Heart left ventricle (tissue), 16 donors: ENCODE measurements at regions of chr1 and their contacts with region 1.

Region 1: GRCh38 chr1:235011599-235012435 is 116.8 kb downstream of the TOMM20 start:
- DNase-seq: peak; percentile 68 to 85 (median 74)
- ATAC-seq: peak; percentile 51 to 93 (median 88)
- H3K4me3 ChIP-seq: peak overlapping the region in 1 of 12 donors; percentile 10
- H3K27ac ChIP-seq: peak overlapping the region in 11 of 12 donors; percentile 32 to 92 (median 56)
- H3K4me1 ChIP-seq: peaks cover 0 to 68% (median 13%) of the 10 kb centered on the region in 12 donors
- H3K27me3 ChIP-seq: no peaks in the 10 kb centered on the region
- CTCF ChIP-seq: no peak
- POLR2A ChIP-seq: no peak

Region 2: GRCh38 chr1:234743791-234744611 is 267.8 kb before region 1 on chr1:
- intact Hi-C with region 1: no loop called
- DNase-seq: no peak
- ATAC-seq: peak in 3 of 4 donors; percentile 55 to 70 (median 64)
- H3K4me3 ChIP-seq: peak overlapping the region in 6 of 12 donors; percentile 2 to 29 (median 16)
- H3K27ac ChIP-seq: peak overlapping the region in 10 of 12 donors; percentile 1 to 75 (median 44)
- H3K4me1 ChIP-seq: peaks cover 0 to 21% (median 6%) of the 10 kb centered on the region in 12 donors
- H3K27me3 ChIP-seq: no peaks in the 10 kb centered on the region
- CTCF ChIP-seq: no peak
- POLR2A ChIP-seq: no peak

Region 3: DNA sequence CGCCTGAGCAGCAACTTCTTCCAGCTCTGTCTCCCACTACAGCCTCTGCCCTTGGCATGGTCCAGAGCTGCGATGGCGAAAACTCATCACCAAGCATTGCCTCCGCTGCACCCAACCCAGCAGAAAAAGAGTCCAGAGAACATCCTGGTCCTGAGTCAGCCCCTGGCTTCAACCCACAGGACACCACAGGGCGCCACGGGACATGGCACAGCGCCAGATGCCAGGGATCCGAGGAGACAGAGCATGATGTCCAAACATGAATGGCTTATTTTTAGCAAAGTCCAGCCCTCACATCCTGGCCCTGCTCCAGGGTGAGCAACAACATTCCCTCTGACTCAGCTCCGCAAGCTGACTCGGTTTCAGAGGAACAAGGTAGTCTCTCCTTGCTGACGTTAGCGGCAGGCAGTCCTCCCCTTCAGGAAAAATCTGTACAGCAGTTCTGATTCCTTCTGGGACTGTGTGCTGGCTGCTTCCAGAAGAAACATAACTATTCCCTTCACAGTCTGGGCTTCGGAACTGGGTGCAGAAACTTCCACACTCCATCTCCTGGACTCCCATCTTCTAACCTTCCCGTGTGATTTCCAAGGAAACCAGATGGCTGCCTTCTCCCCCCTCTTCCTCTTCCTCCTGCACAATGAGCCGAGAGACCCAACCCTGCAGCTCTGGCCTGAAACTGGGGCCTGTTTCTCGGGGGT is 14.5 kb before region 1 on chr1:
- intact Hi-C with region 1: no loop called
- DNase-seq: peak; percentile 95 to 100 (median 98)
- ATAC-seq: peak; percentile 94 to 96 (median 96)
- H3K4me3 ChIP-seq: peak overlapping the region in 7 of 12 donors; percentile 6 to 28 (median 18)
- H3K27ac ChIP-seq: peak overlapping the region; percentile 88 to 98 (median 93)
- H3K4me1 ChIP-seq: peaks cover 8 to 32% (median 26%) of the 10 kb centered on the region in 12 donors
- H3K27me3 ChIP-seq: no peaks in the 10 kb centered on the region
- CTCF ChIP-seq: peak in 1 of 12 donors; percentile 18
- POLR2A ChIP-seq: peak in 1 of 2 donors; percentile 62

Region 4: DNA sequence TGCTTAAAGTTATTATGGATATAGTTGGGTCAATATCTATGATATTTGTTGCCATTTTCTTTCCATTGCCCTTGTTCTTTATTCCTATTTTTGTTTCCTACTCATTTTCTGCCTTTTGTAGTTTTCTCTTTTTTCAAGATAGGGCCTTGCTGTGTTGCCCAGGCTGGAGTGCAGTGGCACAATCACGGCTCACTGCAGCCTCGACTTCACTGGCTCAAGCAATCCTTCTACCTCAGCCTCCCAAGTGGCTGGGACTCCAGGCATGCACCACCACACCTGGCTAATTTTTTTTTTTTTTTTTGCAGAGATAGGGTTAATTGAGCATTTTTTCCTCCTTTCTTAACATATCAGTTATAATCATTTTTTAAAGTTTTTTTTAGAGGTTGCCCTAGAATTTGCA is 24.1 kb after region 1 on chr1:
- intact Hi-C with region 1: loop called in 1 of 10 experiments (anchors 2 kb)
- DNase-seq: no peak
- ATAC-seq: no peak
- H3K4me3 ChIP-seq: no peak overlapping the region
- H3K27ac ChIP-seq: no peak overlapping the region
- H3K4me1 ChIP-seq: peaks cover 0 to 6% (median 0%) of the 10 kb centered on the region in 12 donors
- H3K27me3 ChIP-seq: no peaks in the 10 kb centered on the region
- CTCF ChIP-seq: no peak
- POLR2A ChIP-seq: no peak

Region 5: GRCh38 chr1:235045034-235045720 is 33.4 kb after region 1 on chr1:
- intact Hi-C with region 1: loop called in 1 of 10 experiments (anchors 5 kb)
- DNase-seq: no peak
- ATAC-seq: no peak
- H3K4me3 ChIP-seq: no peak overlapping the region
- H3K27ac ChIP-seq: peak overlapping the region in 1 of 12 donors; percentile 89
- H3K4me1 ChIP-seq: peaks cover 5 to 50% (median 21%) of the 10 kb centered on the region in 12 donors
- H3K27me3 ChIP-seq: no peaks in the 10 kb centered on the region
- CTCF ChIP-seq: no peak
- POLR2A ChIP-seq: no peak